Common myeloid progenitor, CD34-positive (primary cell): ENCODE measurements at regions of chr21 and their contacts with region 1.

Region 1: DNA sequence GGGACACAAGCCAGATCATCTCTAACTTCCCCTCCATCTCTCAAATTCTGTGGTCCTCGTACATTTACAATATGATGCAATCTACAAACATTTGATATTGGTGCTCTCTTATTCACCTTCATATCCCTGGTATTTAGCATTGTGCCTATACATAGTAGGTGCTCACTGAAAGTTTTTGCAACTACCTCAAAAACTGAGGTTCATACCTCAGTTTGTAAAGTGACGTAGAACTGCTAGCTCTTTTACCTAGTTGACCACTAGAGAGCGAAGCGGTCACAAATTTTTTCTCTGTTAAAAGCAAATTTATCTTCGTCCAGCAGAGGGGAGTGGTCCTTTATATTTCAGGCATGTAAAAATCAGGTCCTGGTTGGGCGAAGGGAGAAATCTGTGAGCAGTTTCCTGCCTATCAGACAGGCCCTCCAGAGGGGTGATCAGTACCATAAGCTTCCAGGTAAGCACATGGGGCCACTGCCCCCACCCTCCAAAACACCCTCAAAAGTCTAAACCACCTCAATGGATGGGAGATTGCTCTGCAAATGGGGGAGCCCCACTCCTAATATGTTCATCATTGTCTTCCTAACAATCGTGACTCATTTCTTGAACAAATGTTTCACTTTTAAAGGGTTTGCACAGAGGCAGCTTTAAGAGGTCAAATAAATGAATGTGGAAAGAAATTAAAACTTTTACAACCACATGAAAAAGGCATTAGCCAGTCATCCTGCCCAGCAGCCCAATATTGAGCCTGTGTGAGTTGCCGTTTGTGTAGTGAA is 10.6 kb upstream of the HLCS start:
- DNase-seq: peak; percentile 87 to 89 (median 88)
- H3K4me3 ChIP-seq: no peak overlapping the region
- H3K27ac ChIP-seq: no peak overlapping the region
- H3K4me1 ChIP-seq: peaks cover 2 to 24% (median 18%) of the 10 kb centered on the region in 4 experiments
- H3K27me3 ChIP-seq: peaks cover 0 to 2% (median 0%) of the 10 kb centered on the region in 5 experiments

Region 2: GRCh38 chr21:36966066-36966820 is 10.8 kb before region 1 on chr21 and contains the start of gene HLCS:
- CTCF ChIA-PET with region 1: interaction called, 29 read pairs
- POLR2A ChIA-PET with region 1: no interaction called
- DNase-seq: peak; percentile 63 to 82 (median 75)
- H3K4me3 ChIP-seq: peak within 1 kb of the TSS; percentile 45 to 85 (median 67)
- H3K27ac ChIP-seq: peak within 1 kb of the TSS in 1 of 2 experiments; percentile 75
- H3K4me1 ChIP-seq: peaks cover 0 to 17% (median 13%) of the 10 kb centered on the region in 4 experiments
- H3K27me3 ChIP-seq: no peaks in the 10 kb centered on the region

Region 3: GRCh38 chr21:36989699-36990507 is 12.8 kb after region 1 on chr21:
- CTCF ChIA-PET with region 1: interaction called, 25 read pairs
- POLR2A ChIA-PET with region 1: no interaction called
- DNase-seq: peak; percentile 91 to 95 (median 94)
- H3K4me3 ChIP-seq: peak overlapping the region; percentile 32 to 75 (median 67)
- H3K27ac ChIP-seq: peak overlapping the region in 1 of 2 experiments; percentile 64
- H3K4me1 ChIP-seq: peaks cover 0 to 8% (median 5%) of the 10 kb centered on the region in 4 experiments
- H3K27me3 ChIP-seq: peaks cover 0 to 10% (median 4%) of the 10 kb centered on the region in 5 experiments

Region 4: DNA sequence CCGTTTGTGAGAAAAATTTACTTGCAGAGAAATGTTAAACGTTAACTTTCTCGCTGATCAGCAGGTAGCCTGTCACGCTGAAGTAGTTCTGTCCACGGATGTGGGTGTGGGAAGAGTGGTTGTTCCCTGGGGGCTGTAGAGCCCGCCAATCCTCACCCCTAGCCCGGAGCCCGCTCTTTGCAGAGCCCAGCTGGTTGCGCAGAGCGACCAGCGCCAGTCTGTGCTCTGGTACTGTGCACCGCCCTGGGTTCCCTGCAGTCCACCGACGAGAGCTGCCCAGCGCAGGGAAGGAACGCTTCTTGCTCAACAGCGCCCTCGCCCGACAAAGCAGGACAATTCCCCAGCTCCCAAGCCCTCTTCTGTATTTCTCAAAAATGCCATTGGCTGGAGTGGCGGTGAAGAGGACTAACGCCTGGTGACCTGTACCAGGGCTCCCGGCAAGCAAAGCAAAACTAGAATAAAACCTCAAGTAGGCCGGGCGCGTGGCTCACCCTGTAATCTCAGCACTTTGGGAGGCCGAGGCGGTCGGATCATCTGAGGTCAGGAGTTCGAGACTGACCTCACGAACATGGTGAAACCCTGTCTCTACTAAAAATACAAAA is 32.8 kb after region 1 on chr21:
- CTCF ChIA-PET with region 1: interaction called, 20 read pairs
- POLR2A ChIA-PET with region 1: no interaction called
- DNase-seq: peak; percentile 82 to 89 (median 85)
- H3K4me3 ChIP-seq: peak overlapping the region in 6 of 7 experiments; percentile 32 to 68 (median 55)
- H3K27ac ChIP-seq: no peak overlapping the region
- H3K4me1 ChIP-seq: peaks cover 0 to 20% (median 18%) of the 10 kb centered on the region in 4 experiments
- H3K27me3 ChIP-seq: peaks cover 4 to 48% (median 12%) of the 10 kb centered on the region in 5 experiments

Region 5: GRCh38 chr21:37087188-37087587 is 110.1 kb after region 1 on chr21:
- CTCF ChIA-PET with region 1: interaction called, 10 read pairs
- POLR2A ChIA-PET with region 1: no interaction called
- DNase-seq: peak; percentile 59 to 79 (median 76)
- H3K4me3 ChIP-seq: no peak overlapping the region
- H3K27ac ChIP-seq: no peak overlapping the region
- H3K4me1 ChIP-seq: peaks cover 7 to 18% (median 15%) of the 10 kb centered on the region in 4 experiments
- H3K27me3 ChIP-seq: no peaks in the 10 kb centered on the region